ENCODE measurements at regions of chr12 and their contacts with region 1.

Region 1: DNA sequence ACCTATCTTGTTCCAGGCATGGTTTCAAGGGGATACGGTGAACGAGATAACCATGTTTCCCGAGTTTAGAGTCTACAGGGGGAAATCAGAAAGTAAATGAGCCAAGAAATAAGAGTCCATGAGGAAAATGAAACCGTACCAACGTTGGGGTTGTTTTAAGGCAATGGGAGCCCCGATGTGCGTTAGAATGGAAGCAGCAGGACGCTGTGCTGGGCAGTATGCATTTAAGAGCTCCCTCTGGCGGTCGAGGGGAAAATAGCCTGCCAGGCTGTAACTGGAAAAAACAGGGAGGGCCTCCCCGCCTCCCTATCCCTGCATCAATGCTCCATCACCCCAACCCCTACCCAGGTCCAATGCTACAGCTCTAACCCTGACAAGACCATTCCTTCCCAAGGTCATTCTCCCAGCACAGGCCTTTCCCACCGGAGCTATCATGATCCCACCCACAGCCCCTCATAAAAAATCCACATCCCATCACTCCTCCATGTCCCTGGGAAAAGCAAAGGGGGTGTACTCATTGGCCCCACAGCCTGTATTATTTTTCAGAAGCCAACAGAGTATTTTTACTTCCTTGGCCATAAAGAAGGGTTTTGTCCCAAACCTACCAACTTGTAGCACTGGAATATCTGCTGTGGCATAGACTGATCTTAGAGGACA is 226.3 kb upstream of the NOS1 start:
- DNase-seq: peak; percentile 60
- ATAC-seq: peak; percentile 30 to 51

Region 2: GRCh38 chr12:117236456-117237001 is 351.2 kb before region 1 on chr12:
- intact Hi-C with region 1: loop called (anchors 5 to 10 kb)
- DNase-seq: peak; percentile 81
- ATAC-seq: peak in 1 of 2 donors; percentile 24